Activated CD4-positive, alpha-beta T cell treated with anti-CD3 and anti-CD28 coated beads, Interleukin-2, amount 10 ng/mL, durations not matched to agents 24 days and 14 days (primary cell): ENCODE measurements at regions of chr9 and their contacts with region 1.

Region 1: GRCh38 chr9:72271613-72272478 is 93.2 kb downstream of the ZFAND5 start:
- DNase-seq: peak; percentile 79
- H3K4me3 Mint-ChIP-seq: no peak overlapping the region
- H3K27ac Mint-ChIP-seq: no peak overlapping the region
- H3K4me1 Mint-ChIP-seq: no peaks in the 10 kb centered on the region
- H3K27me3 Mint-ChIP-seq: peaks cover 9% of the 10 kb centered on the region

Region 2: GRCh38 chr9:71806901-71807307 is 464.9 kb before region 1 on chr9:
- intact Hi-C with region 1: loop called (anchors 5 kb)
- DNase-seq: peak; percentile 90
- H3K4me3 Mint-ChIP-seq: no peak overlapping the region
- H3K27ac Mint-ChIP-seq: no peak overlapping the region
- H3K4me1 Mint-ChIP-seq: peaks cover 4% of the 10 kb centered on the region
- H3K27me3 Mint-ChIP-seq: peaks cover 3% of the 10 kb centered on the region

Region 3: GRCh38 chr9:72038890-72039410 is 232.9 kb before region 1 on chr9:
- intact Hi-C with region 1: loop called (anchors 1 kb)
- DNase-seq: peak; percentile 89
- H3K4me3 Mint-ChIP-seq: no peak overlapping the region
- H3K27ac Mint-ChIP-seq: no peak overlapping the region
- H3K4me1 Mint-ChIP-seq: peaks cover 4% of the 10 kb centered on the region
- H3K27me3 Mint-ChIP-seq: peaks cover 22% of the 10 kb centered on the region

Region 4: DNA sequence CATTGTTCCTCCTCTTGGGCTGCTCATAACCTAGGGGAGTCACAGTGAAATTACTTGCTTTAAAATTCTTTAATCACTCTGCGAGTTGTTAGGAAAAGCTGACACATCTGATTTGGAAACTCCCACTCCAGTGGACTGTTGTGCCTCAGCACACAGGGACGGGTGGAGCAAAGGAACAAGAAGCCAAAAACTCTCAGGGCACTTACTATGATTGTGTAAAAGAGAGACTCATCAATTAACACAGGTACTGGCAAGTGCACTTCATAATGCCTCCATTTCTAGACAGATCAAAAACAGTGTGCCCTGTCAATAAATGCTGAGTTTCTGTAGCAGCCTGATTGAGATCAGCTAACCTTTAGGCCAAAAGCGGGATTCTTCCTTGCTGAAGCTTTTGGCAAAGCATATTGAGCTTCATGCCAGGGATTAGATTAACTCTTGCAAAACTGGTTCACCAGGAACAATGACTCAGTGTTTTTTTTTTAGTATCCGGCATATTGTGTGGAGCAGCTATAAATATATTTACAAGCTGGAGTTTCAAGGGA is 305.4 kb after region 1 on chr9:
- intact Hi-C with region 1: no loop called
- DNase-seq: no peak
- H3K4me3 Mint-ChIP-seq: no peak overlapping the region
- H3K27ac Mint-ChIP-seq: no peak overlapping the region
- H3K4me1 Mint-ChIP-seq: peaks cover 31% of the 10 kb centered on the region
- H3K27me3 Mint-ChIP-seq: peaks cover 2% of the 10 kb centered on the region